ENCODE measurements at regions of chr17 and their contacts with region 1.

Region 1: DNA sequence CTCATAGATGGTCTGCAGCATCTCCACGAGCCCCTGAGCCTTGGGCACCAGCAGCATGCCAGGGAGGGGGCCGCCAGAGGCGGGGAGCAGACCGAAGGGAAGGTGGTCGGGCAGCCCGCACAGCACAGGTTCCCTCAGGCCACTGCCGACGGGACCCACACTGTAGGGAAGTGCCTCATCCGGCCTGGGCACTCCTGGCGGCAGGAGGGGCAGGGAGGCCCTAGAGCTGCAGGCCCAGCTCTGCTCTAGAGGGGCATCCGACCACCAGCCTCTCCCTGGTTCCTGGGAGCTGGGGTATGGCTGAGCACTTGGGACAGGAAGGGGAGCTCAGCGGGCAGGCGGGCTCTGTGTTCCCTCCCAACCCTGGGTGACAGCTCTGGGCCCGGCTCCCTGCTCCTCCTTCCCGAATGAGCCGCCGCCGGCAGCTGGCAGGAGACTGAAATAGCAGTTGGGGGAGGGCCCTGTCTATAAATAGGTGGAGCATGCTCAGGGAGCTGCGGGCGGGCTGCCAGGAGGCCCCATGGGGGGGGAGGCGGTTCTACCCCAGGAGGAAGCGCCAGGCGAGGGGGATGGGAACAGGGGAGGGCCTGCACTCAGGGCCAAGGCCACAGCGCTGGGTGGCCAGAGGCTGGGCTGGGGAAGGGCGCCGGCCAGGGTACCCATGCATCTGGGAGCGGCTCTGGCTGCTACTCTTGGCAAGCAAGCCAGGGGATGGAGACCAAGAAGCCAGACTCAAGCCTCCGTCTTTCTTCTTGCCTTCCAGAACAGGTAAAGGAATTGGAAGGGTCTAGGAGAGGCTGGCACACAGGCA is 12.4 kb downstream of the HDAC5 start:
- DNase-seq: peak; percentile 62
- H3K4me3 ChIP-seq: peak overlapping the region; percentile 54
- H3K27me3 ChIP-seq: no peaks in the 10 kb centered on the region
- CTCF ChIP-seq: no peak

Region 2: DNA sequence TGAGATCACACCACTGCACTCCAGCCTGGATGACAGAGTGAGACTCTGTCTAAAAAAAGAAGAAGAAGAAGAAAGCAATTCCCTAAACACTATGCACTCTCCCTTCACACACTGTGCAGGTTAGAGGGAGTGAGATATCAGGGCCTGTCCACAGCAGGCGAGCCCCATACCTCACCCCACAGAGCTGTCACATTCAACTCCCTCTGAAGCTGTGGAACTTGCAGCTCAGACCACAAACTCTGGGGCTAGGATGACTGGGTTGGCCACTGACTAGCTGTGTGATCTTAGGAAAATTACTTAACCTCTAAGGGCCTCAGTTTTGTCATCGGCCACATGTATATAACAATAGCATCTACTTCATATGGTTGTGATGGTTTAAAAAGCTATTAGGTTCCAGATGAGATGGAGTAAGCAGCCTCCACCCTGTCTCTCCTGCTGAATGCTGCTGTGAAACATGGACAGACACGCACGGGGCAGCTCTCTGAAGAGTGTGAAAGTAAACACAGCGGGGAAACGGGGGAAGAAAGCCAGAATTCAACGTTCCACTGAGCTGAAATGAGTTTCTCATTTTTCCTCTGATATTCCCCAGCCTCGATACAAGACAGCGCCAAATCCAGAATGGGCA is 143.7 kb before region 1 on chr17:
- CTCF ChIA-PET with region 1: no interaction called
- POLR2A ChIA-PET with region 1: no interaction called
- DNase-seq: no peak
- H3K4me3 ChIP-seq: no peak overlapping the region
- H3K27me3 ChIP-seq: 0 out of 2 replicates have a peak, but pooled peaks cover 1% of the 10 kb centered on the region
- CTCF ChIP-seq: no peak

Region 3: DNA sequence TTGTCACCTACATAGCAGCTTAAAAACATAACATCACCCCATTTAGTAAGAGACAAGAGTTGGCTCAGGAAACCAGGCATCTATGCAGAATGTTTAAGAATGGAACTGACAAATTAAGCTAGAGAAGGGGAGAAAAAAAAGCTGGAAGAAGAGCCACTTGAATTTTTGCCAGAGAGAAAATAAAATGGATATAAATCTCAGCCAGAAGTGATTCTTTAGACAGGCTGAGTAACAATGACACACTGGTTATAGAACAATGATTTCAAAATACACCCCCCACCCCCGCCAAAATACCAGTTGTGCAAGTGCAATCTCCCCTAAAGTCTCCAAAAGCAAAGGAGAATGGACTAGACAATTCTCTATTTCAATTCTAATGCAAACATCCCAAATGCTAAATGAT is 67.0 kb before region 1 on chr17:
- CTCF ChIA-PET with region 1: interaction called, 41 read pairs
- POLR2A ChIA-PET with region 1: no interaction called
- DNase-seq: no peak
- H3K4me3 ChIP-seq: no peak overlapping the region
- H3K27me3 ChIP-seq: no peaks in the 10 kb centered on the region
- CTCF ChIP-seq: no peak

Region 4: GRCh38 chr17:44070455-44071197 is 40.4 kb before region 1 on chr17 and contains the start of gene G6PC3:
- CTCF ChIA-PET with region 1: interaction called, 19 read pairs
- POLR2A ChIA-PET with region 1: interaction called, 12 read pairs
- DNase-seq: peak; percentile 86
- H3K4me3 ChIP-seq: peak within 1 kb of the TSS; percentile 54
- H3K27me3 ChIP-seq: no peaks in the 10 kb centered on the region
- CTCF ChIP-seq: 0 out of 2 replicates have a peak, but pooled peaks have one; percentile 4
- polyA plus RNA-seq, gene G6PC3: 115 and 151 TPM in 2 replicates

Region 5: DNA sequence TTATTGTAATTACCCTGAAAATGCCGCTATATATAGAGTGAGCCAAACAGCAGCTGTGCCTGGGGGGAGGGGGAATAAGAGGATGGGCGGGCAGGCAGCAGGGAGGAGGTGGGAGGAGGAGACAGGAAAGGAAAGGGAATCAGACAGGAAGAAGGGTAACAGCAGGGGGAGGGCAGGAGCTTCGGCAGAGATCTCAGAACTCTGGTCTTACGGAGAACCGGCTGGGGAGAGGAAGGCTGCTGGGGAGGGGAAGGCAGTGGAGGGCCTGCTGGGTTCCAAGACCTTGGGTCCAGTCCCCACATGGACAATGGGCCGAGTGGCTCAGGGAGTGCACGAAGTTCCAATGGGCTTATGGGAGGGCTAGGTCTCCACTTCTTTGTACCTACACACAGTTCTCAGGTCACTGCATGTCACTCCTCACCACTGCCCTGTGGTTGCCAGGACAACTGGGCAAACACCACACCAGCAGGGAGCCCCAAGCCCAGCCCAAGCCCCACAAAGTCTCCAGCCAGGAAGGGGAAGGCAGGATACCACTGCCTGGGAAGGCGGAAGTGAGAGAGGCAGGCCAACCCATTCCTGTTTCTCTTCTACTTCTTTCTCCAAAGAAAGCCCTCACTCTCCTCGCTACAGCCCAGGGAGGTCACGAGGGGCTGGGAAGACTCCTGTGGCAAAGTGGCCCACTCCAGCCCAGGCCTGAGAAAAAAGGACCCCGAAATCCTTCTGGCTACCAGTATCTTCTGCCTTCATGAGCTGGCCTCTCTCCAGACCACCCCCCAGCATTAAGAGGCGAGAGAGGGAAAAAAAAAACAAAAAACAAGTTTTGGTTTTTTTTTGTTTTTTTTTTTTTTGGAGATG is 15.2 kb before region 1 on chr17:
- CTCF ChIA-PET with region 1: interaction called, 18 read pairs
- POLR2A ChIA-PET with region 1: interaction called, 3 read pairs
- DNase-seq: peak; percentile 63
- H3K4me3 ChIP-seq: peak overlapping the region; percentile 3; the same call in 1 of the 2 replicates
- H3K27me3 ChIP-seq: no peaks in the 10 kb centered on the region
- CTCF ChIP-seq: peak; percentile 34

Region 6: DNA sequence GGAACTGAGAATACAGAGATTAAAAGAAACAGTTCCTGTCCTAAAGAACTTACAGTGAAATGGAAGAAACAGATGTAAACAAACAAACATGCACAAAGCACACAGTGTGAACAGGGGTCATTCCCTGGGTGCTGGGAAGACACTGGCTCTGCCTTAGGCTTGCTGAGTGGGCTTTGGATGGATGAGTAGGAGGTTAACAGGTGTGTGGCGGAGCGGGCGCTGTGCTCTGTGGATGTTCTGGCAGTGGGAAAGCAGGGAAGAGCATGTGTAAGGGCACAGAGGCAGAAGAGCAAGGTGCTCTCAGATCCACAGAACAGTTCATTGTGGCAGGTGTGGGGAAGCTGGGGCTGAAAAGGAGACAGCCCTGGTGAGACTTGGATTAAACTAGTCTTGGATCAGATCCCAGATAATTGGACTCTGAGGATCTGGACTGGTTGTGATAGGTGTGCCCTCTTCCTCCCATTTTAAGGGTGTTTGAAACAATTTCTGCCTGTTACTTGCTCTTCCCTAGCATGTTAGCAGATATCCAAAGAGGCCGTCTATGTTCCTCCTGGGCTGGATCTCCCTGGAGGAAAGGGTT is 38.8 kb after region 1 on chr17:
- CTCF ChIA-PET with region 1: interaction called, 11 read pairs
- POLR2A ChIA-PET with region 1: no interaction called
- DNase-seq: no peak
- H3K4me3 ChIP-seq: no peak overlapping the region
- H3K27me3 ChIP-seq: no peaks in the 10 kb centered on the region
- CTCF ChIP-seq: no peak

Region 7: GRCh38 chr17:44376124-44376523 is 265.1 kb after region 1 on chr17:
- CTCF ChIA-PET with region 1: no interaction called
- POLR2A ChIA-PET with region 1: no interaction called
- DNase-seq: no peak
- H3K4me3 ChIP-seq: no peak overlapping the region
- H3K27me3 ChIP-seq: no peaks in the 10 kb centered on the region
- CTCF ChIP-seq: peak; percentile 50

Region 8: GRCh38 chr17:44710059-44710336 is 599.0 kb after region 1 on chr17:
- CTCF ChIA-PET with region 1: no interaction called
- POLR2A ChIA-PET with region 1: no interaction called
- DNase-seq: no peak
- H3K4me3 ChIP-seq: no peak overlapping the region; the same call in 1 of the 2 replicates
- H3K27me3 ChIP-seq: no peaks in the 10 kb centered on the region
- CTCF ChIP-seq: no peak